ENCODE measurements at regions of chr4 and their contacts with region 1.

Region 1: GRCh38 chr4:138870737-138871554 is 144.6 kb upstream of the NOCT start:
- DNase-seq: peak; percentile 73
- ATAC-seq: peak; percentile 78
- H3K4me3 Mint-ChIP-seq: no peak overlapping the region
- H3K27ac Mint-ChIP-seq: peak overlapping the region; percentile 24; the same call in 1 of the 2 replicates
- H3K4me1 Mint-ChIP-seq: peaks cover 21% of the 10 kb centered on the region
- H3K27me3 Mint-ChIP-seq: no peaks in the 10 kb centered on the region
- CTCF ChIP-seq: peak; percentile 80

Region 2: DNA sequence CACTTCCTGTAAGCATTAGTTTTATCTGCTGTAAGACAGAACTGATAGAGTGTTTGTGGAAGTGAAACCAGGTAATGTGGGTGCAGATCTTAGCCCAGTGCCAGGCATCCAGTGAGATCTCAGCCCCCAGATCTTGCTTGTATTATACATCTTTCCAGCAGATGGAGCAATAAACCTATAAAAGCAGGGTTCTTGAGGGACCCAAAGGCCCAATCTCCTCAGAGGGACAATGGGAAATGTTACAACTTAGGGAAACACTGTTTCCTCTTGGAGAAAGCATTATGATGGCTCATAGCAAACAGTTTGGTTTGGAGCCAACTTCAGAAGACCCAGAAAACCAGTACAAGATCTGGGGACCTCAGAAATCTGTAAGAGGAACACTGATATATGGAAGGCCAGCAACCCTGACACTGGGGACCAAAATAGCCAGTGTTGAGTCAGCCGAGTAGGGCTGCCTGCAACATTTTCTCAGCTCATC is 835.1 kb before region 1 on chr4:
- CTCF ChIA-PET with region 1: interaction called, 12 read pairs
- POLR2A ChIA-PET with region 1: no interaction called
- DNase-seq: no peak
- ATAC-seq: peak; percentile 97
- H3K4me3 Mint-ChIP-seq: no peak overlapping the region
- H3K27ac Mint-ChIP-seq: no peak overlapping the region
- H3K4me1 Mint-ChIP-seq: peaks cover 8% of the 10 kb centered on the region
- H3K27me3 Mint-ChIP-seq: no peaks in the 10 kb centered on the region
- CTCF ChIP-seq: peak; percentile 25; the same call in 1 of the 2 replicates

Region 3: GRCh38 chr4:138522366-138522765 is 348.6 kb before region 1 on chr4:
- CTCF ChIA-PET with region 1: interaction called, 14 read pairs
- POLR2A ChIA-PET with region 1: no interaction called
- DNase-seq: no peak
- ATAC-seq: peak; percentile 93
- H3K4me3 Mint-ChIP-seq: no peak overlapping the region
- H3K27ac Mint-ChIP-seq: no peak overlapping the region
- H3K4me1 Mint-ChIP-seq: no peaks in the 10 kb centered on the region
- H3K27me3 Mint-ChIP-seq: no peaks in the 10 kb centered on the region; the same call in 1 of the 2 replicates
- CTCF ChIP-seq: peak; percentile 34; the same call in 1 of the 2 replicates

Region 4: GRCh38 chr4:138576684-138577083 is 294.3 kb before region 1 on chr4:
- CTCF ChIA-PET with region 1: interaction called, 35 read pairs
- POLR2A ChIA-PET with region 1: no interaction called
- DNase-seq: no peak
- ATAC-seq: peak; percentile 93
- H3K4me3 Mint-ChIP-seq: no peak overlapping the region
- H3K27ac Mint-ChIP-seq: no peak overlapping the region
- H3K4me1 Mint-ChIP-seq: peaks cover 21% of the 10 kb centered on the region
- H3K27me3 Mint-ChIP-seq: no peaks in the 10 kb centered on the region
- CTCF ChIP-seq: no peak

Region 5: DNA sequence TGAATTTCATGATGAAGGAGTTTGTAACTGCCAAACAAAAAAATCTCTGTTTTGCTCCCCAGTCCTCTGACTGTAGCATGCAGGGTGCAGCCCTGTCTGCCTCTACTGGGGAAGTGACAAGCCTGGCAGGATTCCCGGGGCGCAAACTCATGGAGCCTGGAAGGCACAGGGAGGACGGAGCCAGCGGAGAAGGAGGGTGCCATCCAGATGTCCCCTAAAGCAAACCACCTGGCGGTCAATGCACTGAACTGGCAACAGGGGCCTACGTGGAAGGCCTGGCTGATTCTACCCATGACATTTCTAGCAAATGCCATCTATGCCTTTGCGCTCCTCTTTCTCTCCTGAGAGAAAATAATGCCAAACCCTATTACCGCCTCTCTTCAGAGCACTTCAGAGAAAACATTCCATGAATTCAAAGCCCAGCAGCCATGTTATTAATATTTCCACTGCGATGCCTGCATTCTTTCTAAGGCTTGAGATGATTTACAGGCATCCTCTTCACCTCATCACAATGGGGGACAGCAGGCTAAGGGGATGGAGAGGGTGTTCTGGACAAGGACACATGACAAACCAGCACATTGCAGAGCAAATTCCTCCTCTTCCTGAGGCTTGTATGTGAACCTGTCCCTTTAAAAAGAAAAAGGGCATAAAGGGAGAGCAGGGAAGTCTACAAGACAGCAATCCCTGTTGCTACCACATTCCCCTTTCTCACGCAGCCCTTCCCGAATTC is 184.7 kb before region 1 on chr4:
- CTCF ChIA-PET with region 1: interaction called, 50 read pairs
- POLR2A ChIA-PET with region 1: no interaction called
- DNase-seq: no peak
- ATAC-seq: no peak
- H3K4me3 Mint-ChIP-seq: no peak overlapping the region
- H3K27ac Mint-ChIP-seq: no peak overlapping the region
- H3K4me1 Mint-ChIP-seq: peaks cover 31% of the 10 kb centered on the region
- H3K27me3 Mint-ChIP-seq: no peaks in the 10 kb centered on the region; the same call in 1 of the 2 replicates
- CTCF ChIP-seq: no peak

Region 6: DNA sequence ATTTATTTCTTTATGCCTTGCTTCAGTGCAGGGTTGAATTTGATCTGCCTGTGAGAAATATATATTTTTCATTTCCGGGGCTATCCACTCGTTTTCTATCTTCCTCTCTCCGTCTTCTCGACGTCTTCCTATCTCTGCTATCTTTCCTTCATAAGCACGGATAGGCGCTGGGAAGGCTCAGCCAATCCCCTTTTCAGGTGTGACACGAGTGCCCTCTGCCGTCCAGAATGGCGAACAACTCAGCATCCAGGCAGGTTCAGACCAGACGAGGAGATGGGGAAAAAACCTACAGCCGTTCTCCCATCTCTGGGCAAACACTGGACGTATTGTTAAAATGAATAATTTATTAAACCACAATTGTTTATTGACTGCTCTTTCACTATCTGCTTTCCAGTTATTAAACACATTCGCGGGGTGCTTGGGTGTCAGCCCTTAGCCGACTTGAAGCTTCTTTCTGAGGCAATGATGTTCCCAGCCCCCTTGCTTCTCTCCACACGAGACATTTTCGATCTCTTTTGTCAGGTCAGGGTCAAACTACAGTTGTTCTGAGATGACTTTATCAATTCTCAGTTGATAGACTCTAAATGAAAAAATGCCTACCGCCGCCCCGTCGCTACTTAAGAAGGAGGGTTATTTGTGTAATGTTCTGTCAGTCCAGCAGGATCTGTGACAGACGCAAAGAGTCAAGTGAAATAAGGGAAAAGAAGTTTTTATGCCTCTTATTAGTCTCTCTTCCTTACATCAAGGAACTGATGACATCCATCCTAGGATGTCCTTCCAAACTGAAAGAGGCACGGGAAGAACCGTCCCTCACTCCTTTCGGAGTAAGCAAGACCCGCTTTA is 48.4 kb after region 1 on chr4:
- CTCF ChIA-PET with region 1: interaction called, 12 read pairs
- POLR2A ChIA-PET with region 1: no interaction called
- DNase-seq: peak; percentile 77
- ATAC-seq: peak; percentile 99
- H3K4me3 Mint-ChIP-seq: no peak overlapping the region
- H3K27ac Mint-ChIP-seq: no peak overlapping the region
- H3K4me1 Mint-ChIP-seq: peaks cover 31% of the 10 kb centered on the region
- H3K27me3 Mint-ChIP-seq: no peaks in the 10 kb centered on the region
- CTCF ChIP-seq: no peak

Region 7: GRCh38 chr4:138999666-139000065 is 128.7 kb after region 1 on chr4:
- CTCF ChIA-PET with region 1: no interaction called
- POLR2A ChIA-PET with region 1: no interaction called
- DNase-seq: no peak
- ATAC-seq: no peak
- H3K4me3 Mint-ChIP-seq: no peak overlapping the region
- H3K27ac Mint-ChIP-seq: no peak overlapping the region
- H3K4me1 Mint-ChIP-seq: peaks cover 9% of the 10 kb centered on the region
- H3K27me3 Mint-ChIP-seq: no peaks in the 10 kb centered on the region
- CTCF ChIP-seq: no peak